Activated CD4-positive, alpha-beta T cell treated with anti-CD3 and anti-CD28 coated beads for 36 hours (primary cell): ENCODE measurements at regions of chr4 and their contacts with region 1.

Region 1: GRCh38 chr4:42568610-42569207 is 88.2 kb downstream of the ATP8A1 start:
- DNase-seq: peak; percentile 79
- ATAC-seq: peak; percentile 89
- H3K4me3 Mint-ChIP-seq: no peak overlapping the region
- H3K27ac Mint-ChIP-seq: no peak overlapping the region
- H3K4me1 Mint-ChIP-seq: no peaks in the 10 kb centered on the region
- H3K27me3 Mint-ChIP-seq: no peaks in the 10 kb centered on the region

Region 2: DNA sequence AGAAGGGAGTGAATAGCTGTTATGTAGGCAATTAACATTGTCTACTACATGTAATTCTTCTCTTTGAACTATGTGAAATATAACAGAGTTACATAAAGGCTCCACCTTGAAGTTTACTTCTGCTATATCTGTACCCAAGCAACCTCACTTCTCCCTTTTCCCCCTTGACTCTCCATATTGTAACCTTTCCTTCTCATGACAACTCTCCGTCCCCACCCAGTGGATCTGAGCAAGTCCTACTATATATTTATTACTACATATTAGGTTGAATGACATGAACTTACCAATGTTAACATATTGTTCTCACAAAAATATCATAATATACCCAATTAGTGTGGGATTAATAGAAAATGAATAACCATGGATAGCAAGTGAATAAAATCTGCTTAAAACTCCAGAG is 181.4 kb after region 1 on chr4:
- CTCF ChIA-PET with region 1: interaction called, 12 read pairs
- POLR2A ChIA-PET with region 1: no interaction called
- intact Hi-C with region 1: loop called (anchors 1 kb)
- DNase-seq: peak; percentile 27
- ATAC-seq: peak; percentile 47
- H3K4me3 Mint-ChIP-seq: no peak overlapping the region
- H3K27ac Mint-ChIP-seq: no peak overlapping the region
- H3K4me1 Mint-ChIP-seq: peaks cover 2% of the 10 kb centered on the region
- H3K27me3 Mint-ChIP-seq: no peaks in the 10 kb centered on the region

Region 3: GRCh38 chr4:42768125-42768748 is 199.5 kb after region 1 on chr4:
- CTCF ChIA-PET with region 1: interaction called, 21 read pairs
- POLR2A ChIA-PET with region 1: no interaction called
- intact Hi-C with region 1: loop called (anchors 1 to 5 kb)
- DNase-seq: peak; percentile 48
- ATAC-seq: no peak
- H3K4me3 Mint-ChIP-seq: no peak overlapping the region
- H3K27ac Mint-ChIP-seq: no peak overlapping the region
- H3K4me1 Mint-ChIP-seq: no peaks in the 10 kb centered on the region
- H3K27me3 Mint-ChIP-seq: peaks cover 8% of the 10 kb centered on the region

Region 4: GRCh38 chr4:42816189-42816879 is 247.6 kb after region 1 on chr4:
- CTCF ChIA-PET with region 1: interaction called, 12 read pairs
- POLR2A ChIA-PET with region 1: no interaction called
- intact Hi-C with region 1: loop called in 1 of 2 experiments (anchors 2 kb)
- DNase-seq: no peak
- ATAC-seq: no peak
- H3K4me3 Mint-ChIP-seq: no peak overlapping the region
- H3K27ac Mint-ChIP-seq: no peak overlapping the region
- H3K4me1 Mint-ChIP-seq: no peaks in the 10 kb centered on the region
- H3K27me3 Mint-ChIP-seq: peaks cover 2% of the 10 kb centered on the region

Region 5: DNA sequence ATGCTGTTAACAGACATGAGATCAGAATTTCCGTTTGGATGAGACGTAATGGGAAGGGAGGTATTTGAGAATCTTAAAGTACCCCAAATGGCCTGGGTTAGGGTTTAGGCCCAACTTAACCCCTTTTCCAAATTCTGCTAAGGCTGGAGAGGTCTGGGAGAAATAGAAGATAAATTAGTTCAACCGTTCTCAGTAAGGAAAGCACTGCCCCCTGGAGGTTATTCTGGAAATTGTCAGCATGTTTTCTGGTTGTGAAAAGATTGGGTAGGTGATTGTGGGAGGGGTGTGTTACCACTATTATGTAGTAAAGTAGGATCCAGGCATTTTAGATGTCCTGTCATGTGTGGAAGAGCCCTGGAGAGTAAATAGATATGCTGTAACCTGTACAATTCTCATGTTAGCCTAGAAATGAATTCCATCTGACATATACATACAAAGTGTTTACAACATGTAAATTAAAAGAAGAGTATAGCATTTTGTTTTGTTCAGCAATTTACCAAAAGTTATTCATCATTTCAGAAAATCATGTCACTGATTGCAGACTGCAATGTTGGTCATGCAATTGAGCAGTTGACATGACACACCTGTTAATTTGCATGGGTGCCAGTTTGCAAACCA is 297.0 kb after region 1 on chr4:
- CTCF ChIA-PET with region 1: interaction called, 62 read pairs
- POLR2A ChIA-PET with region 1: no interaction called
- intact Hi-C with region 1: loop called (anchors 1 kb)
- DNase-seq: peak; percentile 59
- ATAC-seq: peak; percentile 36
- H3K4me3 Mint-ChIP-seq: no peak overlapping the region
- H3K27ac Mint-ChIP-seq: no peak overlapping the region
- H3K4me1 Mint-ChIP-seq: no peaks in the 10 kb centered on the region
- H3K27me3 Mint-ChIP-seq: peaks cover 18% of the 10 kb centered on the region